Dorsolateral prefrontal cortex (tissue), 120 donors: ENCODE measurements at regions of chr22 and their contacts with region 1.

Region 1: DNA sequence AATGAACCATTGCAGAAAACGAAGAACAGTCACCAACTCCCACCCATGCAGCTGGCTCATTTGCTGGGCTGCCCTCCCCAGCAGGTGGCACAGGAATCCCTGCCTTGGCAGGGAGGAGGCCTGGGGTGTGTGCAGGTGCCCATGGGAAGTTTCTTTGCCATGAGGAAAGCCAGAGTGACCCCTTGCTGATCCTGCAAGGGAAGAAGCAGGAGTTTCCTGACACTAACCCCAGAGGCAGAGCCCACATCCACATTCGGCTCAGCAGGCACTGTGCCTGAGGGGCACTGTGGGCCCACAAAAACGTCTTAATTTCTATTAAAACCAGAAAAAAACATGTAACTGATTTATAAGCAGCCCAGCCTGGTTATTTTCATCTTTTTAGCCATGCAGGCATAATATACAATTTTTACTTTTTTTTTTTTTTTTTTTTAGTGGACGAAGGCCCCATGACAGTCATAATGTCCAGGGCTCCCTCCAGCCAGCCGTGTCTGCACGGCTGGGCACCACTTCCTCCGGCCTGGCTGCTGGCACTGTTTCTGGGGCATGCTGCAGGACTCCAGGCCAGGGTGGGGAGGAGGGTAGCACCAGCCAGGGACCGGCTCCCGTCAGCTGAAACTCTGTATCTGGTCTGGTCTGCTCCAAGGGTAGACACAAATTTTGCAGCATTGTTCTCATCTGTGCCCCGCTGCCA is 8.8 kb upstream of the RRP7A start:
- DNase-seq: peak in 1 of 10 donors; percentile 62
- H3K4me3 ChIP-seq: no peak overlapping the region
- H3K27ac ChIP-seq: no peak overlapping the region
- H3K27me3 ChIP-seq: no peaks in the 10 kb centered on the region
- CTCF ChIP-seq: no peak

Region 2: DNA sequence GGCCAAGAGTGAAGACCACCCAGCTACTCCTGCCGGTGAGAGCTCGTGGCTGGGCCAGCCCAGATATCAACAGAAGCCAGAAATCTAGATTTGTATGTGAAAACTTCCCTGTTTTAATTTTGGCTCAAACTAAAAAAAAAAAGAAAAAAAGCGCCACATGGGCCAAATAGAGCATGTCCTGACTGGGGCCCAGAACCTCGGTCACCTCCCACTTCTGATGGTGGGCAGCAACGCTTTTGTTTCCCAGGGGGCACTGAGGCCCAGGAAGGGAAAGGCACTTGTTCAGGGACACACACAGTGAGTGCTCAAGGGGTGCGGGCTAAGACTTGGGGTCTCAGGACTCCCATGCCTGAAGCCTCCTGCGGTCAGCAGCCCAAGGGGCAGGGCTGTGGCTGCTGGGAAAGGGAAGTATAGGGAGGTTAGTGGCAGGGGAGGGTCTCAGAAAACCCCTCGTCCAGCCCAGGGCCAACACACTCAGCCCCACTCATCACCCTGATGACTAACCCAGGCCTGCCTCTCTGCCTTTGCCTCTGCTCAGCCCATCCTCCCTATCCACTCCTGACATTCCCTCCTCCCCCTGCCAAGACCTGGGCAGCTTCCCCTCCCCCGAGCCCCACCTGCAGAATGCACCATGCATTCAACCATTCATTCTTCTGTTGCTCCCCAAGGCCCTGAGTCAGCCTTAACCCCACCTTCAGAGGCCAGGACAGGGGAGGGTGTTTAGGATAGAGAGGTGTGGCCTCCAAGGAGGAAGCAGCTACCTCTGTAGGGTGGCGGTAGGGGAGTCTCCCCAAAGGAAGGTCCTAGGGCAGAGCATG is 227.9 kb before region 1 on chr22:
- intact Hi-C with region 1: no loop called
- DNase-seq: no peak
- H3K4me3 ChIP-seq: peak overlapping the region in 1 of 59 donors; percentile 8
- H3K27ac ChIP-seq: peak overlapping the region in 10 of 59 donors; percentile 11 to 66 (median 33)
- H3K27me3 ChIP-seq: no peaks in the 10 kb centered on the region
- CTCF ChIP-seq: no peak

Region 3: GRCh38 chr22:42596336-42596735 is 67.9 kb after region 1 on chr22:
- intact Hi-C with region 1: loop called in 1 of 2 experiments (anchors 10 kb)
- DNase-seq: peak in 1 of 10 donors; percentile 31
- H3K4me3 ChIP-seq: no peak overlapping the region
- H3K27ac ChIP-seq: peak overlapping the region in 27 of 59 donors; percentile 5 to 66 (median 37)
- H3K27me3 ChIP-seq: no peaks in the 10 kb centered on the region
- CTCF ChIP-seq: no peak